ENCODE measurements at regions of chr9 and their contacts with region 1.

Region 1: GRCh38 chr9:5843794-5844504 is 11.0 kb upstream of the ERMP1 start:
- DNase-seq: peak; percentile 29
- ATAC-seq: peak; percentile 53
- H3K4me3 ChIP-seq: no peak overlapping the region
- H3K27ac ChIP-seq: peak overlapping the region; percentile 74
- H3K4me1 ChIP-seq: peaks cover 17% of the 10 kb centered on the region
- H3K27me3 ChIP-seq: peaks cover 8% of the 10 kb centered on the region
- CTCF ChIP-seq: no peak
- POLR2A ChIP-seq: no peak
- RAD21 ChIP-seq: no peak

Region 2: DNA sequence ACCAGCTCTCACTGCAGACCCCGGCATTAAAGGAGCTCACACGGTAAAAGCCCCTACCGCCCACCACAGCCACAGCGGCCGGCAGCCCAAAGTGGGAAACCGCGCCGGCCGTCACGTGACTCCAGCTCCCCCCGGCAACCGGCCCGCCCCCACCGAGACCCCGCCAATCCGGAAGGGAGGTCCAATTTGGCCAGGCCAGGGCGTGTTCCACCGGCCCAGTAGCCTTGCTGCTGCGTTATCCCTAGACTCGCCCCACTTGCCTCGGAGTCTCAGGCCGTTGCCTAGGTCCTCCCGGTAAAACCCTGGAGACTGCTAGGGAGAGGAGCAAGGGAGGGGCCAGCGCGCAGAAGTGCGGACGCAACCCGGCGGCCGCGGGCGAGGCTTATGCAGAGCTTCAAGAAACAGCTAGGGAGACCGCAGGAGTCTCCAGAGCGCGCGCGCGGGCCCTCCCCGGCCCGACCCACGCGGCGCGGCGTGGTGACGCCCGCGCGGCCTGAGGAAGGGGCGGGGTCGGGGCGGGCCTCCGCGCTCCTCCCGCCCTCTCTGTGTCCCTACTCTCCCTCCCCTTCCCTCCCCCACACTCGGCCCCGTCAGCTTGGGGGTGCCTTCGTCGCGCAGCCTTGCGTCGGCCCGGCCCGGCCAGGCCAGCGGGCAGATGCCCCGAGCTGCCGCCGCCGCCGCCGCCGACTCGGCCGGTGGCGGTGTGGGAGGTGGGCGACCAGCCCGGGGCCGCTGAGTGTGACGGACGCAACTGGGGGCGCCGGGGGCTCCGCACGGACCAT is 215.2 kb before region 1 on chr9 and contains the start of gene RIC1:
- CTCF ChIA-PET with region 1: no interaction called
- POLR2A ChIA-PET with region 1: no interaction called
- dilution Hi-C with region 1: no loop called
- in situ Hi-C with region 1: no loop called
- intact Hi-C with region 1: no loop called
- DNase-seq: peak; percentile 89
- ATAC-seq: peak; percentile 93
- H3K4me3 ChIP-seq: peak within 1 kb of the TSS; percentile 75
- H3K27ac ChIP-seq: peak within 1 kb of the TSS; percentile 99
- H3K4me1 ChIP-seq: peaks cover 2% of the 10 kb centered on the region; the same call in 1 of the 2 replicates
- H3K27me3 ChIP-seq: no peaks in the 10 kb centered on the region
- CTCF ChIP-seq: no peak
- POLR2A ChIP-seq: peak; percentile 93
- RAD21 ChIP-seq: no peak
- total RNA-seq, gene RIC1: 68.6 and 76.9 TPM in 2 replicates

Region 3: GRCh38 chr9:5708414-5708813 is 135.5 kb before region 1 on chr9:
- CTCF ChIA-PET with region 1: no interaction called
- POLR2A ChIA-PET with region 1: no interaction called
- dilution Hi-C with region 1: no loop called
- in situ Hi-C with region 1: no loop called
- intact Hi-C with region 1: no loop called
- DNase-seq: no peak
- ATAC-seq: no peak
- H3K4me3 ChIP-seq: no peak overlapping the region
- H3K27ac ChIP-seq: no peak overlapping the region
- H3K4me1 ChIP-seq: peaks cover 8% of the 10 kb centered on the region
- H3K27me3 ChIP-seq: no peaks in the 10 kb centered on the region
- CTCF ChIP-seq: no peak
- POLR2A ChIP-seq: no peak
- RAD21 ChIP-seq: no peak

Region 4: DNA sequence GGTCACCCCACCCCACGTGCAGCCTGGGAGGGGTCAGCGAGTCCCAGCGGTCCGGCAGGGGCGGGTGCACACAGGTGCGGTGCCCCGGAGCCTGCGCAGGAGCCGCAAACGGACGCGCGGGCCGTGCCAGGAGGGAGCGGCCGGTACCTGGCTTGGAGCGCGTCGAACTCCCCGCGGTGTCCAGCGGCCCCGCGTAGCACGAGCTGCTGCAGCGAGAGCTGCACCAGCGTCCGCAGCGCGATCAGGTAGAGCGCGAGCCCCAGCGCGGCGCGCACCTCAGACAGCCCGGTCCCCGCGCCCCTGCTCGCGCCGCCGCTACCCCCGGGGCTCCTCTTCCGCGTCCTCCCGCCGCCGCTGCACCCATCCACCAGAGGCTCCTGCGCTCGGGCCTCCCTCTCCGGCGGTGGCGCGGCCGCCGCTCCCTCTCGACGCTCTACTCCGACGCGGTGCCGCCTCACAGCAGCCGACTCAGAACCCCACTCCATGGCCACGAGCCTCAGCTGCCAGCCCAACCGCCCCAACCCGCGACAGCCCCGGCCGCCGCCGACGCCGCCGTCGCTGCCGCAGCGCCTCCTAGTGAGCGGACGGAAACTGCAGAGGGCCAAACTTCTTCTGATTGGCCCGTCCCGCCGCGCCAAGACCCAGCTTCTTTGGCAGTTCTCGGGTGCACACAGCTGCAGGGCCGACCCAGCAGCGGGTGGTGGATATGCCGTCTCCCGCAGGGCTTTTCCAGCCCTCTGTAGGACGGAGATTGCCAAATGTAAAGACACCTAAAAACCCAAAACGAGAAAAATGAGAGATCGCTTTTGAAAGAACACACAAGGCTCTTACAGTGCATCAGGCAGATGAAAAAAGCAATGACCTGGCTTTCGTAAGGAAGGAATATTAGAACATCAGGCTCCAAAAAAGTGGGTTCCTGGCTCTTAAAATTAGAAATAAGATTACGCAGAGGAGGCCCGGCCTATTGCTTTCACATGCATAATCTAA is 11.1 kb before region 1 on chr9 and contains the start of gene ERMP1:
- CTCF ChIA-PET with region 1: interaction called, 21 read pairs
- POLR2A ChIA-PET with region 1: no interaction called
- dilution Hi-C with region 1: no loop called
- in situ Hi-C with region 1: no loop called
- intact Hi-C with region 1: no loop called
- DNase-seq: peak; percentile 74
- ATAC-seq: peak; percentile 97
- H3K4me3 ChIP-seq: peak within 1 kb of the TSS; percentile 68
- H3K27ac ChIP-seq: no peak within 1 kb of the TSS; the same call in 1 of the 2 replicates
- H3K4me1 ChIP-seq: no peaks in the 10 kb centered on the region
- H3K27me3 ChIP-seq: peaks cover 5% of the 10 kb centered on the region
- CTCF ChIP-seq: peak; percentile 89
- POLR2A ChIP-seq: no peak
- RAD21 ChIP-seq: peak; percentile 59
- total RNA-seq, gene ERMP1: 4.7 and 5.0 TPM in 2 replicates

Measured in IMR-90 (cell line).